Activated CD8-positive, alpha-beta T cell treated with anti-CD3 and anti-CD28 coated beads, Interleukin-2, amount 10 ng/mL, durations not matched to agents 7 days and 5 days (primary cell): ENCODE measurements at regions of chr17 and their contacts with region 1.

Region 1: DNA sequence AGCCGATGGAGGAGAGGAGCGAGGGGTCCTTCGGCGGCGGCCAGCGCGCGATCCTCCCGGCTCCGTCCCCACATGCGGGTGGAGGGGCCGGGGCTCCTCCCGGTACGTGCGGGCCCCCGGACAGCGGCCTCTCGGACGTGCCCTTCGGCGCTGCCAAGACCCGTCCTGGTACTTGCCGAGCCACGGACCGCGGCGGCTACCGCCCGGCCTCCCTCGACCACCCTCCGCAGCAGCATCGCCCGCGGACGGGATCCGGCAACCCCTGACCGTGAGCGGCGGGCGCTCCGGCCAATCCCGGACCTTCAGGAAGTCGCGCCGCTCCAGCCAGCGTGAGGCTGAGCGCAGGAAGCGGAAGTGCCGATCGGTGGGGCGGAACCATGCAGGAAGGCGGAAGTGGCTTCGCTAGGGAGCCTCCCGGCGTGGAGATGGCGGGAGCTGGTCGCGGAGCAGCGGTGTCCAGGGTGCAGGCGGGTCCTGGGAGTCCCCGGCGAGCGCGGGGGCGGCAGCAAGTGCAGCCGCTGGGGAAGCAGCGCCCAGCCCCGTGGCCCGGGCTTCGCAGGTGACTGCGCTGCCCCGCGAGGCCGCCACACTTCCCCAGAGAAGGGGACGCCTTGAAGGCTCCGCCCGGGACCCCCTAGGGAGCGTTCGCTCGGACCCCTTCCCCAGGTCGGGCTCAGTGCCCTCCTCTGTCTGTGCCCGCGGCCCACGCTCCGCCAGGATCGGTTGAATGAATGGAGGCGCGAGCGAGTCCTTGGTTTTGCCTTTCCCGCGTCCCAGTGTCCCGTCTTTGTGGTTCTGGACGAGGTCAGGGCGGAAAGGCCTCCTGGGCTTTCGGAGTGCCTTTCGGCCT is at the starts of genes CCDC137 and OXLD1:
- DNase-seq: peak; percentile 96
- ATAC-seq: peak; percentile 89
- H3K4me3 Mint-ChIP-seq: peak within 1 kb of the TSS; percentile 97
- H3K27ac Mint-ChIP-seq: peak within 1 kb of the TSS; percentile 99
- H3K4me1 Mint-ChIP-seq: peaks cover 62% of the 10 kb centered on the region
- H3K27me3 Mint-ChIP-seq: no peaks in the 10 kb centered on the region
- total RNA-seq, gene CCDC137: 42.3 to 43.7 TPM
- total RNA-seq, gene OXLD1: 48.5 to 52.3 TPM

Region 2: DNA sequence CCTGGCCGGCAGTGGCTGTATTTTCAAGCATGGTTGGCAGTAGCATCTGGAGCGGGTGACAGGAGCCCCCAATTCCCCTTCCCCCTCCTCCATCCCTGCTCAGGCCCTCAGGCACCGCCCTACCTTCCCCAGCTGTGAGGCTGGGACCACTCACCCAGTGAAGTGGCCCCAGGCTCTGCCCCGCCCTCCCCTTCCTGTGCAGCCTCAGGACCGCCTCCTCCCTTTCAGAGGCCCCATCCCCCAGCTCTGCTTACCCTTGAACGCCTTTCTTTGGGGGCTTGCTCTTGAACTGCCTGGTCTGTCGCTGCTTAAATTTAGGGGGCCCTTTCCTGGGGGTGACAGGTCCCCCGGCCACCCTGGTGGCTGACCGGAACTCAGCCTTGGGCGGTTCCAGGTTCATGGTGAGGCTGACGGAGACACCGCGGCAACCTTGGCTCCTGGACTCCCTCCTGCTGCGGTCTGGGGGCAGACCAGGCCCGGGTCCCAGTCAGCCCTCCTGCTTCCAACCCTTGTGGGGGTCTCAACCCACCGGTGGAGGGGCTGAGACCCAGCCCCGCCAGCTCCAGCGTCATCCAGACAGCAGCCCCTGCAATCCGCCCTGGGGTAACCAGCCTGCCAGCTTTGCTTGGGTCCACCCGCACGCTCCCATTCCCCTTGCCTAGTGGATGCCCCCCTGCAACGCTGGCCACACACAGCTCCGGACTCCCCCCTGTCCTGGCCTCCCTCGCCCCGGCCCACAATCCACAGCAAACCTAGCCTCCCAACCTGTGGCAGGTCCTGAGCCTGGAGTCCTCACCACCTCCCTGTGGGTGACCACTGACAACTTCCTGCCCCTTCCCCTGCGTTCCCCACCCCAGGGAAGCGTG is 13.4 kb before region 1 on chr17:
- CTCF ChIA-PET with region 1: interaction called, 3 read pairs
- POLR2A ChIA-PET with region 1: interaction called, 12 read pairs
- DNase-seq: peak; percentile 72
- ATAC-seq: peak; percentile 74
- H3K4me3 Mint-ChIP-seq: peak overlapping the region; percentile 90
- H3K27ac Mint-ChIP-seq: peak overlapping the region; percentile 96
- H3K4me1 Mint-ChIP-seq: peaks cover 50% of the 10 kb centered on the region
- H3K27me3 Mint-ChIP-seq: peaks cover 9% of the 10 kb centered on the region

Region 3: GRCh38 chr17:81683584-81684237 is 17.1 kb after region 1 on chr17 and contains the starts of genes ARL16 and HGS:
- CTCF ChIA-PET with region 1: interaction called, 3 read pairs
- POLR2A ChIA-PET with region 1: interaction called, 18 read pairs
- DNase-seq: peak; percentile 98
- ATAC-seq: peak; percentile 99
- H3K4me3 Mint-ChIP-seq: peak within 1 kb of the TSS; percentile 88
- H3K27ac Mint-ChIP-seq: peak within 1 kb of the TSS; percentile 90
- H3K4me1 Mint-ChIP-seq: peaks cover 34% of the 10 kb centered on the region
- H3K27me3 Mint-ChIP-seq: no peaks in the 10 kb centered on the region
- total RNA-seq, gene ARL16: 21.3 to 28.4 TPM
- total RNA-seq, gene HGS: 107 to 128 TPM

Region 4: GRCh38 chr17:81702971-81703746 is 36.6 kb after region 1 on chr17 and contains the start of gene MRPL12:
- CTCF ChIA-PET with region 1: interaction called, 5 read pairs
- POLR2A ChIA-PET with region 1: interaction called, 31 read pairs
- DNase-seq: peak; percentile 94
- ATAC-seq: peak; percentile 89
- H3K4me3 Mint-ChIP-seq: peak within 1 kb of the TSS; percentile 95
- H3K27ac Mint-ChIP-seq: peak within 1 kb of the TSS; percentile 96
- H3K4me1 Mint-ChIP-seq: peaks cover 35% of the 10 kb centered on the region
- H3K27me3 Mint-ChIP-seq: no peaks in the 10 kb centered on the region
- total RNA-seq, gene MRPL12: 102 to 104 TPM